Calu3 (cell line): ENCODE measurements at regions of chr3 and their contacts with region 1.

Region 1: GRCh38 chr3:39541917-39542329 is 74.4 kb downstream of the MOBP start:
- DNase-seq: no peak
- H3K4me3 Mint-ChIP-seq: no peak overlapping the region
- H3K27ac Mint-ChIP-seq: no peak overlapping the region
- H3K4me1 Mint-ChIP-seq: no peaks in the 10 kb centered on the region
- H3K27me3 Mint-ChIP-seq: no peaks in the 10 kb centered on the region
- CTCF ChIP-seq: peak; percentile 26

Region 2: DNA sequence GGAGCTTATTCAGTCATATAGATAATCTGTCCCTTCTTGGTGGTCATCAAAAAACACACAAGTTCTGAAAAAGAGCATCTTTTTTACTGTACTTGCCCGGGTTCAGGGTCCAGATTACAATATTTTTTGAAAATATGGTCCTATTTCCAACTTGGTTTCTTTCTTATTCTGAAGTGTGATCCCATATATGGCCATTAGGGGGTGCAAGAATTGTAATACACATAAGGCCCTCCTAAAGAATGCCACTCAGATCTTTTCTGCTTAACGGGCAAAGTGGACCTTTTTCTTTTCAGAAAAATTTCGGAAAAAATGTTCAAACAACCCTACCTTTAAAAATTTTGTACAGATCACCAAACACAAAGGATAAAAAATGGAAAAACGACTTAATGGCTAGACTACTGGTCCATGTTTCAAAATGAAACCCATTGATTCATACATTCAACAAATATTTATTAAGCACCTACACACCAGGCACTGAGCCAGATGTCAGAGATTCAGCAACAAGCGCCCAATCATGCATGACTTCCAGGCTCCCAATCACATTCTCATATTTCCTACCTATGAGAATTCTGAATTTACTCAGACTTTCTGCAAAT is 165.5 kb after region 1 on chr3:
- CTCF ChIA-PET with region 1: interaction called, 3 read pairs
- intact Hi-C with region 1: loop called (anchors 5 kb)
- DNase-seq: peak; percentile 32
- H3K4me3 Mint-ChIP-seq: no peak overlapping the region
- H3K27ac Mint-ChIP-seq: no peak overlapping the region
- H3K4me1 Mint-ChIP-seq: peaks cover 10% of the 10 kb centered on the region
- H3K27me3 Mint-ChIP-seq: no peaks in the 10 kb centered on the region
- CTCF ChIP-seq: no peak

Region 3: DNA sequence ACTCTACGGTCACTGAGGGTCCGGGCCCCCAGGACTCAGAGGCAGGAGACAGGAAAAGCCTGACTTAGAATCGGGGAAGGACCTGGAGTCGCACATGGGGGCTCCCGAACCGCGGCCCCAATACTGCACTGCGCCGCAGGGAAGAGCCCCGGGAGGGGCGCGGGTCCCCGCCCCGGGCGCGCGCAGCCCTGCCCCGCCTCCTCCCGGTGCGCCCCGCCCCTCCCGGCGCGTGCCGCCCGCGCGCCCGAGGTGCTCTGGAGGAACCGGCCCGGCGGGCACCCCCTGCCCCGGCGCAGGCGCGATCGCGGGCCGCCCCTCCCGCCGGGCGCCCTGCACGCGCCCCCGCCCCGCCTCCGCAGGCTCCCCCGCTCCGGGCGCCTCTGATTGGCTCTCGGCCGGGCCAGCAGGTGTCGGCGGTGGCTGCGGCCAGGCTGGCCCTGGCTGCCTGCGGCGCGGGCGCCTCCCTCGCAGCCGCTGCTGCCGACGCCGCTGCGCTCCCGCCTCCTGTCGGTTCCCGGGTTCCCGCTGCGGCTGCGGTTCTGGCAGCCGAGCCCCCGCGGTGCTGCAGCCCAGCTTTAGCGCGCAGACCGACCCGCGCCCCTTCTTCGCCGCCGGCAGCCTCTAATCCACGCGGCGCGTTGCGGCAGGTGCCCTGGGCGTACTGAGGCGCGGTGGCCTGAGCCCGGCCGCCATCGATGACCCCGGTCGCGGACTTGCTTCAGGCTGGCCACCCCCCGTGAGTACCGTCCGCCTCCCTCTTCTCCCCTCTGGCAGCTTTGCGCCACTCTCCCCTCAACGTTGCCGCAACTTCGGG is 267.5 kb after region 1 on chr3 and contains the start of gene MYRIP:
- CTCF ChIA-PET with region 1: no interaction called
- intact Hi-C with region 1: loop called (anchors 5 kb)
- DNase-seq: peak; percentile 92
- H3K4me3 Mint-ChIP-seq: peak within 1 kb of the TSS; percentile 94
- H3K27ac Mint-ChIP-seq: peak within 1 kb of the TSS; percentile 70
- H3K4me1 Mint-ChIP-seq: peaks cover 21% of the 10 kb centered on the region
- H3K27me3 Mint-ChIP-seq: peaks cover 55% of the 10 kb centered on the region
- CTCF ChIP-seq: no peak
- total RNA-seq, gene MYRIP: 5.2 and 5.6 TPM in 2 replicates

Region 4: DNA sequence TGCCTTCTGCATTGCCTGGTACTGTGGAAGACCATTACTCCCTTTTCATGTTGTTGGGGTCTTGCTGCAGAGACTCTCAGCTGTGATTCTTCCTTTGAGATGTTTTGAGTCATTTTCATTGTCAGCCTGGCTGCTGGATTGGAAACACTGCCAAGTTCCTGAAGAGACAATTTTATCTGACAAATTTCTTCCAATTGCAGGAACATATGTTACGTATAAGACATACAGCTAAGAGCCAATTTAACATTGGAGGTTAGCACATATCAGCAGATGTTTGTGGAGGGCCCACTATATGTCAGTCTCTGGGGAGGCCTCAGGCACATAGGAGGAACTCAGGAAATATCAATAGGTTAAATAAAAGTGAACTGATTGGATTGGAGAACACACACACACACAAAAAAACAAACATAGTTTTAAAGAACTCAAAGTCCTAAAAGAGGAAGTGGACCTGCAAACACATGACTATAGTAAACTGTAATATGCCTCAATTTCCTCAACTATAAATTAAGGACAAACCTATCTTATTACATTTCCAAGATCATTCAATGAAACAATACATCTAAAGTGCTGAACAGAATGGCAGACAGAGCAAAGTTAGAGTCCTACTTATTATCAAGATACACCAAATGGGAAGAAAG is 439.7 kb after region 1 on chr3:
- CTCF ChIA-PET with region 1: no interaction called
- intact Hi-C with region 1: loop called (anchors 10 kb)
- DNase-seq: no peak
- H3K4me3 Mint-ChIP-seq: no peak overlapping the region
- H3K27ac Mint-ChIP-seq: no peak overlapping the region
- H3K4me1 Mint-ChIP-seq: no peaks in the 10 kb centered on the region
- H3K27me3 Mint-ChIP-seq: no peaks in the 10 kb centered on the region
- CTCF ChIP-seq: no peak

Region 5: DNA sequence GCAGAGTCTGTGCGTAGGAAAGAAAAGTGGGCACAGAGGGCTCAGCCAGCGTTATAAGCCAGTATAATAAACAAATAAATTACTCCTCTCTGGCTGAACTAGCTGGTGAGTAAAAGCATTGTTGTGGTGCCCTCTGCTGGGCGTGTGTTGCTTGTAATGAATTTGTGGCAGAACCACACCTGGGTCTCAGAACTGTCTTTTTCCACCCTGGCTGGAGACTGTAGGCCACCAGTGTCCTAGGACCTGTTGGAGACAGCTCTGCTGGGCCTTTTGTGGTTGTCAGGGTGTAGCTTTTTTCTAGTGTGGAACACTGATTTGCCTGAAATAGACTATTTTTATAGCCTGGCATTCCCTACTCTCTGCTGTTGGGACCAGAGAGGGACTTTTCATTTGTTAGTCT is 637.1 kb after region 1 on chr3:
- CTCF ChIA-PET with region 1: no interaction called
- intact Hi-C with region 1: loop called (anchors 5 kb)
- DNase-seq: peak; percentile 82
- H3K4me3 Mint-ChIP-seq: no peak overlapping the region
- H3K27ac Mint-ChIP-seq: no peak overlapping the region
- H3K4me1 Mint-ChIP-seq: no peaks in the 10 kb centered on the region
- H3K27me3 Mint-ChIP-seq: no peaks in the 10 kb centered on the region
- CTCF ChIP-seq: peak; percentile 59